A673 (cell line): ENCODE measurements at regions of chr6 and their contacts with region 1.

Region 1: GRCh38 chr6:99822741-99823512 is 171.1 kb downstream of the MCHR2 start:
- DNase-seq: peak; percentile 78
- H3K4me3 ChIP-seq: peak overlapping the region; percentile 45
- H3K27ac ChIP-seq: no peak overlapping the region
- H3K4me1 ChIP-seq: peaks cover 5% of the 10 kb centered on the region
- H3K27me3 ChIP-seq: no peaks in the 10 kb centered on the region
- CTCF ChIP-seq: peak; percentile 76

Region 2: DNA sequence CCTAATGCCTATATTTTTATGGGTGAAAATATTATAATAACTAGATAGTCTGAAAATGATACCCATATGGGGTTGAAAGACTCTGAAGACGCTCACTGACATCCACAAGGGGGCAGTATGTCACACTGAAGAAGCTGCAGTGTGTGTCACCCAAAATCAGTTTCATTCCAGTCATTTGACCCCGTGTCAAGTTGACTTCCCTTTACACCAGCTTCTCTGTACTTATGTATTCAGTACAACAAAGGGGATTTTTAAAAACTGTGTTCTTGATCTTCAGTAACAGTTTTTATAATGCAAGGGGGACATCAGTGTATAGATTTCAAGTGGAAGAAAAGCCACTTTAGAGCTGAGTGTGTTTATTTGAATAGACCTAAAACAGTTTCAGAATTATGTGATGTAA is 492.8 kb before region 1 on chr6:
- CTCF ChIA-PET with region 1: no interaction called
- POLR2A ChIA-PET with region 1: no interaction called
- intact Hi-C with region 1: loop called (anchors 5 kb)
- DNase-seq: peak; percentile 80
- H3K4me3 ChIP-seq: no peak overlapping the region
- H3K27ac ChIP-seq: no peak overlapping the region
- H3K4me1 ChIP-seq: no peaks in the 10 kb centered on the region
- H3K27me3 ChIP-seq: no peaks in the 10 kb centered on the region
- CTCF ChIP-seq: peak; percentile 86

Region 3: GRCh38 chr6:99434702-99435530 is 388.0 kb before region 1 on chr6:
- CTCF ChIA-PET with region 1: no interaction called
- POLR2A ChIA-PET with region 1: no interaction called
- intact Hi-C with region 1: loop called (anchors 5 kb)
- DNase-seq: peak; percentile 27
- H3K4me3 ChIP-seq: no peak overlapping the region
- H3K27ac ChIP-seq: no peak overlapping the region
- H3K4me1 ChIP-seq: no peaks in the 10 kb centered on the region
- H3K27me3 ChIP-seq: no peaks in the 10 kb centered on the region
- CTCF ChIP-seq: peak; percentile 67

Region 4: DNA sequence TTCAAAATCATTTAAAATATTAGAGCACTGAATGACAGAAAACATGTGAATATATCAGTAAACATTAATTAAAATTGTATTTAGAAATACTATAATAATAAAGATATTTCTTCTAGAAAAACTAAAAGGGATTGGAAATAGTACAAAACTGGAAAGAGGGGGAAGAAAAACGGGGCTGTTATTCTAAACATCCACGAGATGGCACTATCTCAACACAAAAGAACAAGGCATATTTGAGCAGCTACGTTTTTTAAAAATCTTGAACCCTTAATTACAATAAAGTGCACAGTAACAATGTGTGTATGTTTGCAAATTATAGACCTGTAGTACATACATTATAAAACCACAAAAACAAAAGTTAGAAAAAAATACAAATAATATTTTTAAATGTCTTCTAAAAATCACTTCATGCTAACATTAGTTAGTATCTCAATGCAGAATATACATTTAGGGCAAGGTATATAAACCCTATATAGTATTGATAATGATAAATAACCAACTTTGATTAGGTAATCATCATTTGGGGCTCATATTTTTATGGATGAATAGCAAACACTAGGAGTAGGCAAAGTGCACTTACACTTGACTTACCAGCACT is 355.3 kb before region 1 on chr6:
- CTCF ChIA-PET with region 1: no interaction called
- POLR2A ChIA-PET with region 1: no interaction called
- intact Hi-C with region 1: loop called (anchors 1 kb)
- DNase-seq: peak; percentile 48
- H3K4me3 ChIP-seq: no peak overlapping the region
- H3K27ac ChIP-seq: no peak overlapping the region
- H3K4me1 ChIP-seq: no peaks in the 10 kb centered on the region
- H3K27me3 ChIP-seq: no peaks in the 10 kb centered on the region
- CTCF ChIP-seq: peak; percentile 75